Cardiac septum (tissue), 1 donor: ENCODE measurements at regions of chr22 and their contacts with region 1.

Region 1: DNA sequence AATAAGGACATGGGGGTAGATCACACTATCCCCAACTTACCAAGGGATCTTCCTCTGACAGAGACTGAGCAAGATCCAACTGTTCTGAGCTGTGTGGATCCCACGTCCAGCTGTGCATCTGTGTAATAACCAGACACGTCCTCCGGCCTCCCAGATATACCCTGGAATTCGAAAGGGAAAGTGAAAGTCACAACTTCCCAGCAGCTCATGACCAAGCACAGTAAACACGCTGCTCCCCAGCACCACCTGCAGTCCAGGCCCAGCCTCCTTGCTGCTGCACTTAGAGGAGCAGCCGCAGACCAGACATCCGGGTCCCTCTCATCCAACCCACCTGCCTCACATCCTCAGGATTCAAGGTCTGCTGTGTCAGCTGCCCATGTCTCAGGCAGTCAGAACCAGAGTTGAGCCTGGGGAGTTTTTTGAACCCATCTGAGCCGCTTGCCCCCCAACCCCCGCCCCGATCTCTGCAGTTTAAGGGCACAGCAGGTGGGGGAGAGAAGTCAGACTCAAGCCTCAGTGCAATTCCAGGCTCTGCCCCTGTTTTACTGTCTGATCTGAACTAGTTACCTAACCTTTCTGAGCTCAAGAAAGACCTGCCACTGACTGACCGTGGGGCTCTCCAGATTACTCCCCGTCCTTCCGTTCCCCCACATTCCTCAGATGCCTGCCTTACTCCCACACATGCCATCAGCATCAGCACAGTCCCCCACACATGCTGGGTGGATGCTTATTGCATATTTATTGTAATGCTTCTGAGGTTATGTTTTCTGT is at the start of gene APOL2:
- DNase-seq: peak; percentile 96
- total RNA-seq, gene APOL2: 47.9 TPM

Region 2: DNA sequence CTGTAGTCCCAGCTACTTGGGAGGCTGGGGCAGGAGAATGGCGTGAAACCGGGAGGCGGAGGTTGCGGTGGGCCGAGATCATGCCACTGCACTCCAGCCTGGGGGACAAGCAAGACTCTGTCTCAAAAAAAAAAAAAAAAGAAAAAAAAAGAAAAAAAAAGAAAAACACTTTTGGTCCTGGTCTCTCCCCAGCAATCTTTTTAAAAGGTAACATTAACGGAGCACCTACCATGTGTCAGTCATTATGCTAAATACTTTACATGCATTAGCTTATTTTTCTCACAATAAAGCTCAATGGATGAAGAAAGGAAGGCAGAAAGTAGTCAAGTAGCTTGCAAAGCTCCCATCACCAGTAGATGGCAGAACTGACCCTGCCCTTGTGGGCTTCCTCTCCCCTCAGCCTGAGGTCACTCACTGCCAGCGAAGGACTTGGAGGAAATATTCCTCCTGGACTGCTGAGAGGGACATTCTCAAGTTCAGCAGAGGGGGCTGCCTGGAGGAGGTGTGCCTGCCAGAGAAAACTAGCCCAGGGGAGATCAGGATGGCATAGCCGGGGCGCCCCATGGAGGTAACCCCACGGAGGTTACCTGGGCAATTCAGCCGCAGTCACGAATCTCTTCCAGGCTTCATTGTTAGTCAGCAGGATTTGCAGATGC is 94.6 kb before region 1 on chr22:
- intact Hi-C with region 1: loop called (anchors 10 kb)
- DNase-seq: no peak

Region 3: DNA sequence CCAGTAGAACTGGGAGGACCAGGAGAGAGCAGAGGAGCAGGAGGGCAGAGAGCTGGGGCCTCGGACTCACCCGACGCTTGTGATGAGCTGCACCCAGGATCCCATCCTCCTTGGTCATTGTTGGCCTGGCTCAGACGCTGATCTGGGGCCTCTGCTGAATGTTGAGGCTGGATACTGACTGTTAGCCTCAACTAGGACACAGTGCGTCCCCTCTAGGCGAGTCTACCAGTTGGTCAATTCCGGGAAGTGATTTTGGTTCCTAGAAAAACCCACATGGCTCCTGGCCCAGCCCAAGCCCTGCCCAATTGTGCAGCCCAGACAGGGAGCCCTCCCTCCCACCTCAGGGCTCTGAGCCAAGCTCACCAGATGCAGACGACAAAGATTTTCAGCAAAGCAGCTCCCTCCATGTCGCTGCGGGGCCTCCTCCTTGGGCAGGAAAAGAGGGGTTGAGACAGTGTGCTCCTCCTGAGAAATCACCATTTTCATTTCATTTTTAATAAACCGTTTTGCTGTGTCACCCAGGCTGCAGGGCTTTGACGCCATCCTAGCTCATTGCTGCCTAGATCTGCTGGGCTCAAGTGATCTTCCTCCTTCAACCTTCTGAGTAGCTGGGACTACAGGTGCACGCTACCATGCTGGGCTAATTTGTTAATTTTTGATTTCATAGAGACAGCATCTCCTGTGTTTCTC is 37.8 kb before region 1 on chr22 and contains the start of gene APOL4:
- intact Hi-C with region 1: loop called (anchors 5 kb)
- DNase-seq: peak; percentile 91
- total RNA-seq, gene APOL4: 6.1 TPM

Region 4: DNA sequence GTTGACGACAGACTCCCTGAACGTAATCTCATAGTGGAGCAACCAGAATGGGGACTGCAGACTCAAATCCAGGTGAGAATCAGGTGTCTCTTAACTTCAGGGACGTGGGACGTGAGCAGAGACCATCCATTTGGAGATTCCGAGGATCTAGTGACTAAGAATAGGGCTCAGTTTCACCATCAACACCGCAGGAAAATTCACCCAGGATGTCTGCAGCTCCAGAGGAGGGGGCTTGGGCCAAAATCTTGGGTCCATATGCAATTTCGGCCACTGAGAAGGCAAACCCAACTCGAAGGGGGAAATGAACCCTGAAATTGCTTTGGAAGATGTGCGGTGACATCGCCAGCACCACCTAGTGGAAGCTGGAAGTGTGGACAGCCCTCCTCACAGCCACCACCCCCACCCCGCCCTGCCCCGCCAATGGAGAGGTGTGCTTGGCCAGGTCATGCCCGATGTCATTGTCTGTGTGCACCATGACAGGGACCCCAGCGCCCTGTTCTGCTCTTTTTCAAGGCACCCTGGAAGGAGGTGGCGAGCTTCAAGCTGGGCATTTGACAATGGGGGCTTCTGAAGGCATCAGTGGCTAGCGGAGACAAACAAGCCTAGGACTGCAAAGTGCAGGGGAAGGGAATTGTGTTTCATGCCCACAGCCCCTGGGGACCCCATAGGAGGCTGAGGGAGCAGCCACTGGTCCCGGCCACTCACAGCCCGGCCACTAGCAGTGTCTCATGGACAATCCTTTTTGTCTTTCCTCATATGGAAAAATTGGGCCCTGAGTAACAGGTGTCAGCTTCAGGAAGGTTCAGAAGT is 38.1 kb after region 1 on chr22:
- intact Hi-C with region 1: loop called (anchors 5 kb)
- DNase-seq: no peak